HEK293 (cell line): ENCODE measurements at regions of chr17 and their contacts with region 1.

Region 1: DNA sequence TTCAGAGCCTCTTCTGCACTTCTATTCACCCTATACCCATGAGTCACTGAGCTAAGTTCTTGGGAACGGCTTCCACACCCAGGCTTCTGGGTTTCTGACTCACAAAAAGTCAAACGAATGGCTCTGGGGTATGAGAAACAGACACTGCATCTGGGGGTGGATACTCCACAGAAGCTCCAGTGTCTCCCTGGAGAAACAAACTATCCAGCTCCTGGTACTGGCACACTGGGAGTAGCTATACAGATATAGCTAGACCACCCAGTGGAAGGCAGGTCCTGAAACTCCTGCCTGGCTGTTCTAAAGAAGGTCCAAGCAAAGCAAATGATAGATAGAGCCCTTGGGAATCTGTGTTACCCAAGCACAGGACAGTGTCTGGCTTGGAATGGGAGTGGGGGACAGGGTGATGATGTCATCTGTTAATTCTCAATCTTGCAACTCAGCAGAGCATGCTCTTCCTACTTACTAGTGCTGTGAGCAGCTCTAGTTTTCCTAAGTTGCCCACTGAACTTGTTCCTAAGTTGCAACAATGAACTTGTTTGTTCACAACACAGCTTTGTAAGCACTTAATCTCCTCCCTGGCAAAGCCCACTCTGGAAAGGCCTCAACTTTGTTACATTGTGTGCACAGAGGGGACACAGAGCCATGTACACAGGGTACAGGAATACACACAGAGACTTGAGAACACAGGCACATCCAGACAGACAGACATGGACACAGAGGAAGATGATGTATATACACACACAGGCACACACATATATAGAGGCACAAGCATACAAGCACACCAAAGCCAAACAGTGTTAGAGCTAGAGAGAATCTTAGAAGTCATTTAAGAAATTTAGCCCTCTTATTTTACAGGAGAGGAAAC is 6.7 kb downstream of the MMP28 start:
- H3K4me3 ChIP-seq: no peak overlapping the region
- H3K27ac ChIP-seq: no peak overlapping the region
- H3K4me1 ChIP-seq: no peaks in the 10 kb centered on the region
- CTCF ChIP-seq: no peak

Region 2: DNA sequence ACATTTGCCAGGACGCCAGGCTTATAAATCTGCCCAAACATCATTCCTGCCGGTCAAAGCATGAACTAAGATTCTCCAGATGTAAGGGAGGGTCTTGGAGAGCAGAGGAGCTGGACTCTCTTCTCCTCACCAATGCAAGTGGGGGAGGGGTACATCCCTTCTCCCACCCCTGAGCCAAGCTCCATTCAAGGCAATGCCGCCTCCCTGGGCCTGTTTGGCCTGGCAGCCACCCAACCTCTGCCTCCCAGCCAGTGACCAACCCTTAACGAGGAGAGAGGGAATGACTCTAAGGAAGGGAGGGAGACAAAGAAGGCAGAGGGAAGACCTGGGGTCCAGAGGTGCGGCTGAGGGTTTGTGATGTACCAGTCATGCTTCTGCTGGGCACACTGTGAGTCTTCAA is 14.2 kb before region 1 on chr17:
- CTCF ChIA-PET with region 1: interaction called, 12 read pairs
- POLR2A ChIA-PET with region 1: no interaction called
- H3K4me3 ChIP-seq: no peak overlapping the region
- H3K27ac ChIP-seq: no peak overlapping the region; the same call in 1 of the 2 replicates
- H3K4me1 ChIP-seq: peaks cover 10% of the 10 kb centered on the region; the same call in 1 of the 2 replicates
- CTCF ChIP-seq: no peak

Region 3: GRCh38 chr17:36127199-36127893 is 338.6 kb after region 1 on chr17:
- CTCF ChIA-PET with region 1: no interaction called
- POLR2A ChIA-PET with region 1: no interaction called
- H3K4me3 ChIP-seq: no peak overlapping the region
- H3K27ac ChIP-seq: no peak overlapping the region
- H3K4me1 ChIP-seq: no peaks in the 10 kb centered on the region
- CTCF ChIP-seq: no peak